Activated naive CD4-positive, alpha-beta T cell treated with anti-CD3 and anti-CD28 coated beads for 36 hours (primary cell): ENCODE measurements at regions of chr12 and their contacts with region 1.

Region 1: GRCh38 chr12:93378373-93379325 is 924 bp downstream of the NUDT4 start:
- DNase-seq: peak; percentile 74
- H3K4me3 Mint-ChIP-seq: peak overlapping the region; percentile 99
- H3K27ac Mint-ChIP-seq: peak overlapping the region; percentile 99
- H3K4me1 Mint-ChIP-seq: peaks cover 38% of the 10 kb centered on the region
- H3K27me3 Mint-ChIP-seq: no peaks in the 10 kb centered on the region

Region 2: GRCh38 chr12:92769124-92769901 is 609.3 kb before region 1 on chr12:
- CTCF ChIA-PET with region 1: no interaction called
- intact Hi-C with region 1: no loop called
- DNase-seq: no peak
- H3K4me3 Mint-ChIP-seq: no peak overlapping the region
- H3K27ac Mint-ChIP-seq: no peak overlapping the region
- H3K4me1 Mint-ChIP-seq: peaks cover 26% of the 10 kb centered on the region
- H3K27me3 Mint-ChIP-seq: no peaks in the 10 kb centered on the region

Region 3: GRCh38 chr12:92784795-92785562 is 593.7 kb before region 1 on chr12:
- CTCF ChIA-PET with region 1: interaction called, 3 read pairs
- intact Hi-C with region 1: loop called (anchors 2 kb)
- DNase-seq: peak; percentile 35
- H3K4me3 Mint-ChIP-seq: no peak overlapping the region
- H3K27ac Mint-ChIP-seq: no peak overlapping the region
- H3K4me1 Mint-ChIP-seq: peaks cover 2% of the 10 kb centered on the region
- H3K27me3 Mint-ChIP-seq: no peaks in the 10 kb centered on the region

Region 4: DNA sequence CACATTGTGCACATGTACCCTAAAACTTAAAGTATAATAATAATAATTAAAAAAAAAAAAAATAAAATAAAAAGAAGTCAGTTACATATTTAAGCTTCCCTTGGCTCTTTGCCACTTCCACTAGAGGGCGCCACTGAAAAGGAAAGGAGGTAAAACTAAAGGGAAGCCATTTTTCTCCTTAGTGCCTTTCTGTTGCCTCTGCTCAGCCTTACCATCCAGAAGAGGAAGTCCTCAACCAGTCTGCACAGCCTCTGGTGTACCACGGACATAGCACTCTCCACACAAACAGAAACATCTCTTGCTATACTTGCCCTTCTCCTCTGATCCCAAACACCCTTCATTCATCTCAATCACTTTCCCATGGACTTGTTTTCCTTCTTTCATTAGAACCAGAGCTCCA is 280.6 kb before region 1 on chr12:
- CTCF ChIA-PET with region 1: interaction called, 12 read pairs
- intact Hi-C with region 1: loop called (anchors 1 kb)
- DNase-seq: peak; percentile 91
- H3K4me3 Mint-ChIP-seq: no peak overlapping the region
- H3K27ac Mint-ChIP-seq: peak overlapping the region; percentile 38
- H3K4me1 Mint-ChIP-seq: peaks cover 10% of the 10 kb centered on the region
- H3K27me3 Mint-ChIP-seq: no peaks in the 10 kb centered on the region

Region 5: DNA sequence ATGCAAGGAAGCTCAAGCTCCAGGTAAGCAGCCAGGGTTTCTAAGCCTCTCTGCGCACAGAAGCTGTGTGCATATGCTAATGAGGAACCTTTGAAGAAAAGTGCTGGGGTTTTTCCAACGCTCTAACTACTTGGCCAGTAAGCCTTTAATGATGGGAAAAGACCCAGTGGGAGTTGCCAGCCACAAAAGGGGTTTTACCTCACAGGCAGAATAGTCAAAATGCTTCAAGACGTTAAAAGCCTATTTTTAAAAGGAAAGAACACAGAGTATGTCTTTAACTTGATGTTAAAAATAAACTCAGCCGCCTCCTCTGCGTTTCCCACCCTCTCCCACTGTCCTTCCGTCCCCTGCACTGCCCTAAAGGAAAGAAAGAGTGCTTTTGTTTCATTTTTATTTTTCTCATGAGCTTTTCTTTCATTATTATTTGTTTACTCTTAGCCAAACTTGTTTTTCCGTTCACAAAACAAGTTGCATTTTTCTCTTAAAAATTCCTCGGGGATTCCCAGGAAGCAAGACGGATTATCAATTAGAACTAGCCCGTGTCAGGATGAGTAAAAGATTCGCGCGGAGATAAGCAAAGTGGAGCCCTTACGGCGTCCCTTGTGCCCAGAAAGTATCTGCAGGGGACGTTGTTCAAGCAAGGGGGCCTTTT is 210.7 kb before region 1 on chr12:
- CTCF ChIA-PET with region 1: interaction called, 3 read pairs
- intact Hi-C with region 1: loop called (anchors 1 kb)
- DNase-seq: peak; percentile 85
- H3K4me3 Mint-ChIP-seq: peak overlapping the region; percentile 49
- H3K27ac Mint-ChIP-seq: peak overlapping the region; percentile 67
- H3K4me1 Mint-ChIP-seq: peaks cover 17% of the 10 kb centered on the region
- H3K27me3 Mint-ChIP-seq: peaks cover 7% of the 10 kb centered on the region

Region 6: GRCh38 chr12:93397412-93397811 is 18.8 kb after region 1 on chr12:
- CTCF ChIA-PET with region 1: interaction called, 12 read pairs
- intact Hi-C with region 1: no loop called
- DNase-seq: no peak
- H3K4me3 Mint-ChIP-seq: no peak overlapping the region
- H3K27ac Mint-ChIP-seq: no peak overlapping the region
- H3K4me1 Mint-ChIP-seq: peaks cover 3% of the 10 kb centered on the region
- H3K27me3 Mint-ChIP-seq: no peaks in the 10 kb centered on the region

Region 7: DNA sequence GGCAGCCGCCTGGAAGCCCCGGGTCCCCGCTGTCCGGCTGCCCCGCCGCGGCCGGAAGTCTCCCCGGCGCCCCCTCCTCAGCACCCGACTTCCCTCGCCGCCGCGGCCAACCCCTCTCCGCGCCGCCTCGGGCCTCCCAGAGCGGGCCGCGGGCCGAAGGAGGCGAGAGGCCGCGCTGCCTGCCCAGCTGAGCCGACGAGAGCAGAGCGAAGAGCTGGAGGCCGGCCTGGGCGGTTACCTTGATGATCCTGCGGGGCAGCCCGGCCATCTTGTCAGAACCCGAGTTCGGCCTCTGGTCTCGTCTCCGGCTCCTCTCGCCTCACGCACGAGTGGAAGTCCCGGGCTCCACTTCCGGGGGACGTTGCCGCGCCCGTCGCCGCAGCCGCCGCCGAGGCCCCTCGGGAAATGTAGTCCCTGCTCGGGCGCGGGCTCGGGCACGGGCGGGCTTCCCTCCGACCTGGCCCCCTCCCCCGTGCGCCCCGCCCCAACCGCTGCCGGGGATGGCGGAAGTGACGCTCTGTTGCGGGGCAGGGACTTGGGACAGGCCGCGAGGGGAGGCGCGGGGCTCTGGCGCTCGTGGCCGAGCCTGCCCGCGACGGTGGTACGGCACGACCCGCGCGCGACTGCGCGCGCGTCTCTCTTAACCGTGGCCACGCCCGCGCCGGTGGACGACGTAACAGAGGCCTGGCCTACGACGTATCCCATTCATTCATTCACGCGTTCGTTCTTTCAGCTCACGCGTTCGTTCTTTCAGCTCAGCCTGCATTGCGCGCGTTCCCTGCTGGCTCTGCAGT is 63.2 kb after region 1 on chr12 and contains the start of gene UBE2N:
- CTCF ChIA-PET with region 1: no interaction called
- intact Hi-C with region 1: loop called (anchors 1 kb)
- DNase-seq: peak; percentile 96
- H3K4me3 Mint-ChIP-seq: peak within 1 kb of the TSS; percentile 95
- H3K27ac Mint-ChIP-seq: peak within 1 kb of the TSS; percentile 94
- H3K4me1 Mint-ChIP-seq: peaks cover 46% of the 10 kb centered on the region
- H3K27me3 Mint-ChIP-seq: no peaks in the 10 kb centered on the region
- total RNA-seq, gene UBE2N: 143 TPM

Region 8: GRCh38 chr12:93569656-93570551 is 191.3 kb after region 1 on chr12:
- CTCF ChIA-PET with region 1: no interaction called
- intact Hi-C with region 1: loop called (anchors 1 kb)
- DNase-seq: peak; percentile 88
- H3K4me3 Mint-ChIP-seq: peak overlapping the region; percentile 83
- H3K27ac Mint-ChIP-seq: peak overlapping the region; percentile 81
- H3K4me1 Mint-ChIP-seq: peaks cover 15% of the 10 kb centered on the region
- H3K27me3 Mint-ChIP-seq: peaks cover 17% of the 10 kb centered on the region